CD4-positive, alpha-beta memory T cell (primary cell): ENCODE measurements at regions of chrX and their contacts with region 1.

Region 1: DNA sequence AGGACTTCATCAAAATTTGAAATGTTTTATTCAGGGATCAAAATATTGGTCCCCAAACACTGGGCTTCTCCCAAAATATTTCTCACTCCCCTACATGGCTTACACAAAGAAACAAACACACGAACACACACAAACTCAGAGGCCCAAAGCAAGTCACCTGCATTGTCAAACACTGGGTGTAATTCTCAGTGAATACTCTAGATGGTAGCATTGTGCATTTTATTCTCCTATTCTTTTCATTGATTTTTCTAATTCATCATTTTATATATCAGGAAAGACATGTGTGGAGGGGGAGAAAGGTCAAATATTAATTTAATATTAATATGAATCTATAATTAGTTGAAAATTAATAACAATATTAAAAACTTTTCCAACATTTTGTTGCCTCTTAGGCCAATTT is 72.3 kb upstream of the TNMD start:
- DNase-seq: peak in 4 of 5 donors; percentile 1 to 22 (median 12)
- H3K4me3 ChIP-seq: no peak overlapping the region
- H3K4me3 Mint-ChIP-seq: no peak overlapping the region
- H3K27ac ChIP-seq: no peak overlapping the region
- H3K27ac Mint-ChIP-seq: no peak overlapping the region
- H3K4me1 ChIP-seq: no peaks in the 10 kb centered on the region
- H3K4me1 Mint-ChIP-seq: no peaks in the 10 kb centered on the region
- H3K27me3 ChIP-seq: no peaks in the 10 kb centered on the region
- H3K27me3 Mint-ChIP-seq: no peaks in the 10 kb centered on the region

Region 2: DNA sequence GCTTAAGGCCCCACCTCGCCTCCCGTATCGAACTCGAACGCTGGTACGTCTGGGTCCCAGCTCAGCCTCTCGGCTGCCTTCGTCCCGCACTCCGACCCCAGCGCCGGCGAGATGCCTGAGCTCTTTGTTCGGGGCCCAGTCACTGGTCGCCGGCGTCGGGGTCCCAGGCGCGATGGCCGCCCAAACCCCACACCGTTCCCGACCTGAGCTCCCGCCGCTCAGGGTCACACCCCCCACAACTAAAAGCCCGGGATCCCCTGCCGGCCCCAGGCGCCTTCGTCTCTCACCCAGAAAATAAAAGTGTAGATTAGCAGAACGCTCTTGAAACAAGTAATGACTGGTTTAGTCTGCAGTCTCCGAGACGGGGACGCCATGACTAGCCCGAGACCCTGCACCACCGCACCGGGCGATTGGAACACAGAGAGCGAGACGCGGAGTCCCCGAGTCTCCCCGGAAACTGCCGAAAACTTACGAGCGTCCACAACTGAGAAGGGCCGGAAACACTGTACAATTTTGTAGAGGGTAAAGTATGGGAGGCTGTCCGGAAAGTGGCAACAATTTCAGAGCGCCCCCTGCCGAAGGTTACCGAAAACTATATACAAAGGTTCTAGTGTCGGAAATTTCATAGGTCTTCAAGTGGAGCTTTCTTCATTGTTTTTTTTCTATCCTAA is 124.0 kb after region 1 on chrX and contains the start of gene TSPAN6:
- CTCF ChIA-PET with region 1: interaction called, 7 read pairs
- POLR2A ChIA-PET with region 1: no interaction called
- intact Hi-C with region 1: loop called (anchors 2 kb)
- DNase-seq: peak; percentile 73 to 80 (median 77)
- H3K4me3 ChIP-seq: peak within 1 kb of the TSS in 1 of 2 donors; percentile 35
- H3K4me3 Mint-ChIP-seq: peak within 1 kb of the TSS; percentile 92 to 97 (median 96)
- H3K27ac ChIP-seq: peak within 1 kb of the TSS; percentile 38
- H3K27ac Mint-ChIP-seq: peak within 1 kb of the TSS; percentile 40 to 95 (median 91)
- H3K4me1 ChIP-seq: peaks cover 8% of the 10 kb centered on the region
- H3K4me1 Mint-ChIP-seq: peaks cover 0 to 18% (median 7%) of the 10 kb centered on the region in 4 donors
- H3K27me3 ChIP-seq: no peaks in the 10 kb centered on the region
- H3K27me3 Mint-ChIP-seq: peaks cover 0 to under 1% of the 10 kb centered on the region in 2 donors
- total RNA-seq, gene TSPAN6: 0.93 to 1.2 TPM

Region 3: DNA sequence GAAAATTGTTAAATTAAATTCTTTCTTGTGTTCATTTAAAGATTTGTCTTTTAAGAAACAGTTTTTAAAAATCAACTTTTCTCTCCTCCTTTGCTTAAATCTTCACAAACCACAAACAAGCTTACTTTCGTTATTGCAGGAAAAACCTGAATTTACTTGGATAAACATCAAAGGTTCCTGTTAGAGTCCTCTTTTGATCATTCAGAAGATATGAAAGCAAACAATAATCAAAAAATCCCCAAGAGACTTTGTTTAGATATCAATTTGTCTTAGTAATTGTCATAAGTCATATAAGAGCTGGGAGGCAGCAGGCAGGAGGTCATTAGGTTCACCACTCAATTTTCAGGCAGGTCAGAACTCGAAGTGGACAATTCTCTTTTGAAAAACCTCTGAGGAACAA is 372.4 kb after region 1 on chrX:
- CTCF ChIA-PET with region 1: no interaction called
- POLR2A ChIA-PET with region 1: no interaction called
- intact Hi-C with region 1: no loop called
- DNase-seq: no peak
- H3K4me3 ChIP-seq: no peak overlapping the region
- H3K4me3 Mint-ChIP-seq: no peak overlapping the region
- H3K27ac ChIP-seq: no peak overlapping the region
- H3K27ac Mint-ChIP-seq: no peak overlapping the region
- H3K4me1 ChIP-seq: no peaks in the 10 kb centered on the region
- H3K4me1 Mint-ChIP-seq: peaks cover 0 to 3% (median 0%) of the 10 kb centered on the region in 4 donors
- H3K27me3 ChIP-seq: no peaks in the 10 kb centered on the region
- H3K27me3 Mint-ChIP-seq: peaks cover 1 to 4% of the 10 kb centered on the region in 2 donors